HEK293 (cell line): ENCODE measurements at regions of chr12 and their contacts with region 1.

Region 1: DNA sequence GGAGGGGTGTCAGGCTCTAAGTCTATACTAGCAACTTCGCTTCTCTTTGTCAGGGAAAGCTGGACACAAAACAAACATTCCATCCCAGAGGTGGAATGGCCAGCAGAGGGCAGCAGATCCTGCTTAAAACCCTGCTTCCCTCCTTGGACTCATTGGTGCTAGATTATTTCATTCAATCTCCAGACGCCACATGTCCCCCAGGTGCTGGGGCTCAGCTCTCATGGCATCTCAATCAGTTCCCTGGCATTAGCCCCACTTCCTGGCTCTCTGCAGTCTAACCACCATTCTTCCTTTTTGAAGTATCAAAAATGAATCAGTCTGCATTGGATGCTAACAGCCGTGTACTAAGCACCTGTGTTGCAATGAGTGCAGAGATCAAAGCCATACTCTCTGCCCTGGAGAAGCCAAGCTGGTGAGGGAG is 8.1 kb upstream of the PPP1R1A start:
- H3K4me3 ChIP-seq: no peak overlapping the region
- H3K27ac ChIP-seq: no peak overlapping the region
- H3K4me1 ChIP-seq: no peaks in the 10 kb centered on the region
- CTCF ChIP-seq: peak; percentile 49; the same call in 1 of the 2 replicates

Region 2: DNA sequence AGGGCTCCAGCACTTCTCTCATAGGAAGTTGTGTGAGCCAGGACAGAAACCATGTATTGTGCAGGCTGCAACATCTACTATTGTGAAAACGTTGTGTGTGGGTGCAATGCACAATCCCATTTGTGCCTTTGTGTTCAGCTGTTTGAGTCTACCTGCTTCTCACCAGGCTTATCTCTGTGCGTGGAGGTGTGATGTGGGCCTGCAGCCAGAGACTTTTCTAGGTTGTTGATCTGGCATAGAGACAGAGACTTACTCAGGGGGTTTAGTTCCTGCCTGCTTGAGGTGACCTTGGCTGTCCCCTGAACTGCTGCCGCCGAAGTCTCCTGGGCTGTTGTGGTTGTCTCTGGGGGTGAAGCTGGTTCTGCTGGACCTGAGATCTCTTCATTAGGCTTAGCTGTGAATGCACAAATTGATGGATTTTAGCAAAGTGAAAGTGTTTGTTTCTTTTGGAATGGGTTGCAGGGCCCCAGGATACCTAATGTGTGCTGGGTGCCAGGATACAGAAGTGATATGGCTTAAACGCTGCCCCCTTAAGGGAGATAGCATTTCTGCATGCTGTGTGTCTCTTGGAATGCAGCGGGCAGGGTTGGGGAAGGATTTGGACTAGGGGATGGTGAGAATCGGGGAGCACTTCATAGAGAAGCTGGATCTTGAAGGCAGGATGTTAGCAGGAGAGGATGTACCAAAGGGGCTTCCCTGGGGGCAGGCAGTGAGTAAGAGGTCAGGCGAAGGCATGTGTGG is 35.6 kb after region 1 on chr12:
- CTCF ChIA-PET with region 1: interaction called, 19 read pairs
- POLR2A ChIA-PET with region 1: no interaction called
- H3K4me3 ChIP-seq: no peak overlapping the region
- H3K27ac ChIP-seq: no peak overlapping the region
- H3K4me1 ChIP-seq: no peaks in the 10 kb centered on the region
- CTCF ChIP-seq: no peak